CD8-positive, alpha-beta T cell (primary cell): ENCODE measurements at regions of chr1 and their contacts with region 1.

Region 1: GRCh38 chr1:203744075-203744972 is 20.7 kb upstream of the LAX1 start:
- DNase-seq: peak in 5 of 9 experiments; percentile 16 to 78 (median 48)
- ATAC-seq: peak; percentile 89
- H3K4me3 ChIP-seq: no peak overlapping the region
- H3K4me3 Mint-ChIP-seq: peak overlapping the region; percentile 61
- H3K27ac ChIP-seq: peak overlapping the region; percentile 13 to 54
- H3K27ac Mint-ChIP-seq: peak overlapping the region; percentile 89
- H3K4me1 ChIP-seq: peaks cover 11% of the 10 kb centered on the region
- H3K4me1 Mint-ChIP-seq: peaks cover 22% of the 10 kb centered on the region
- H3K27me3 ChIP-seq: no peaks in the 10 kb centered on the region
- H3K27me3 Mint-ChIP-seq: no peaks in the 10 kb centered on the region
- CTCF ChIP-seq: no peak

Region 2: DNA sequence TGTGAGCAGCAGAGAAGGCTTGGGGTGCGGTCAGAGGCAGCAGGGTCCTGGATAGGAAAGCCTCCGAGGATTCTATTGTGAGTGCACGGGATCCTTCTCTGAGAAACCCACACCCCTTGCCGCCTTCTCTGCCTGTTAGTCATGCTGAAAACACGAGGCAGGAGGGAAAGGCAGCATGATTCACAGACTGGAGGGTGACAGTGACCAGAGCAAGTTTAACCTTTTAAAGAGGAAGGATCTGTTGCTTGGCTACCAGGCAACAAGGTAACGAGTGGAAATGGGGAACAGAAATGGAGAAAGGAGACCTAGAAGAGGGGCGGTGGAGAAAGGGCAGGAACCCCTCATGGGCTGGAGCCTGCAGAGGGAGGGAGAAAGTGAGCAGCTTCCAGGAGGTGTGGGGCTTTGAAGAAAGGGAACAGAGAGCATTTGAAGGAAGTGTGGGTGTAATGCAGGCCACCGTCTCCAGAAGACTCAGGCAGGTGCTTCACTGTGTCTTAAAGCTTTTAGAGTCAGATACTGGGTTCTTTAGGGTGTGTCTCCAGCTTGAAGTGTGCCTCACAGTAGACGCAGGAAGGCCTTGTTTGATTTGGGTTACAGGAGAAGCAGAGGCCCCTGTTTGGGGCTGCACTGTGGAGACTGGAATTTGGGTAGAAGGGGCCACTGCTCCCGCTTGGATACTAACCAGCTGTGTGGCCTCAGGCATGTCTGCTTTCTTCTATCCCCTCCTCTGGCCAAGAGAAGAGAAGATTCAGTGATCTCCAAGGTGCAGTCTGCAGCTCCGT is 231.3 kb before region 1 on chr1:
- CTCF ChIA-PET with region 1: no interaction called
- POLR2A ChIA-PET with region 1: no interaction called
- intact Hi-C with region 1: no loop called
- DNase-seq: peak in 2 of 9 experiments; percentile 29 to 34
- ATAC-seq: peak; percentile 42
- H3K4me3 ChIP-seq: no peak overlapping the region
- H3K4me3 Mint-ChIP-seq: peak overlapping the region; percentile 1
- H3K27ac ChIP-seq: peak overlapping the region in 1 of 2 experiments; percentile 11
- H3K27ac Mint-ChIP-seq: peak overlapping the region; percentile 74
- H3K4me1 ChIP-seq: peaks cover 15% of the 10 kb centered on the region
- H3K4me1 Mint-ChIP-seq: peaks cover 28% of the 10 kb centered on the region
- H3K27me3 ChIP-seq: no peaks in the 10 kb centered on the region
- H3K27me3 Mint-ChIP-seq: peaks cover 3% of the 10 kb centered on the region
- CTCF ChIP-seq: no peak

Region 3: GRCh38 chr1:203776636-203777035 is 32.3 kb after region 1 on chr1:
- CTCF ChIA-PET with region 1: interaction called, 4 read pairs
- POLR2A ChIA-PET with region 1: no interaction called
- intact Hi-C with region 1: loop called (anchors 5 kb)
- DNase-seq: peak in 1 of 9 experiments; percentile 36
- ATAC-seq: no peak
- H3K4me3 ChIP-seq: no peak overlapping the region
- H3K4me3 Mint-ChIP-seq: no peak overlapping the region
- H3K27ac ChIP-seq: no peak overlapping the region
- H3K27ac Mint-ChIP-seq: peak overlapping the region; percentile 72
- H3K4me1 ChIP-seq: no peaks in the 10 kb centered on the region
- H3K4me1 Mint-ChIP-seq: peaks cover 10% of the 10 kb centered on the region
- H3K27me3 ChIP-seq: no peaks in the 10 kb centered on the region
- H3K27me3 Mint-ChIP-seq: no peaks in the 10 kb centered on the region
- CTCF ChIP-seq: no peak

Region 4: GRCh38 chr1:203795441-203796235 is 51.3 kb after region 1 on chr1 and contains the starts of genes ZBED6 and ZC3H11A:
- CTCF ChIA-PET with region 1: no interaction called
- POLR2A ChIA-PET with region 1: no interaction called
- intact Hi-C with region 1: loop called in 1 of 2 experiments (anchors 1 kb)
- DNase-seq: peak; percentile 96 to 100 (median 97)
- ATAC-seq: peak; percentile 96
- H3K4me3 ChIP-seq: peak within 1 kb of the TSS; percentile 67 to 73
- H3K4me3 Mint-ChIP-seq: peak within 1 kb of the TSS; percentile 96
- H3K27ac ChIP-seq: peak within 1 kb of the TSS; percentile 54 to 92
- H3K27ac Mint-ChIP-seq: peak within 1 kb of the TSS; percentile 97
- H3K4me1 ChIP-seq: peaks cover 42% of the 10 kb centered on the region
- H3K4me1 Mint-ChIP-seq: peaks cover 53% of the 10 kb centered on the region
- H3K27me3 ChIP-seq: no peaks in the 10 kb centered on the region
- H3K27me3 Mint-ChIP-seq: no peaks in the 10 kb centered on the region
- CTCF ChIP-seq: no peak
- total RNA-seq, gene ZBED6: 25.0 to 25.8 TPM
- total RNA-seq, gene ZC3H11A: 72.7 to 77.2 TPM